ENCODE measurements at regions of chr3 and their contacts with region 1.

Region 1: DNA sequence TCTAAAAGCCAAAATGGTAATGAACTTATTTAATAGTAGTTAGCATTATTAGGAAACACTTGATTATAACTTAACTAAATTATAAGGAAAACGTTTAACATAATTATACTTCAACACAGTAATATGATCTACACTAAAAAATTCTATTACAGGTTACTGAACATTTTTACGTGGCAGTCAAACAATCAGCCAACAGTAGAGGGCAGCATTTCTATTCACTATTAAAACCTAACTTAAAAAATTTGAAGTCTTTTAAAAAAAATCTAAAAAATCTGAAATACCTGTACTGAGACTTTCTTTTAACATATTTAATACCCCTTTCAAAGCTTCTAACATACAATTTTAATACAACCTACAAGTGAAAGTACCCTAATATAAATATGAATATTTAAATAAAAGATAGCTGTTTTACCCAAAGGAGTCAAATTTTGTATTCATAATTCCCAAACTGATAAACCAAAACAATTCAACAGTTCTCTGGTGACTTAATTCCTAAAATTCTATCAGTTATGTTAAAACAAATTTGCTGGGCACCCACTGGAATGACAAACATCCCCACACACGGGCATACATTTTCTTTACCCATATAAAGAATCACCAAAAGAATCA is 41.5 kb downstream of the DLG1 start:
- DNase-seq: no peak
- ATAC-seq: no peak
- H3K4me3 ChIP-seq: no peak overlapping the region
- H3K27ac ChIP-seq: no peak overlapping the region
- H3K4me1 ChIP-seq: peaks cover 48% of the 10 kb centered on the region in 2 donors
- H3K27me3 ChIP-seq: no peaks in the 10 kb centered on the region
- CTCF ChIP-seq: peak; percentile 51 to 80 (median 75)
- POLR2A ChIP-seq: no peak

Region 2: DNA sequence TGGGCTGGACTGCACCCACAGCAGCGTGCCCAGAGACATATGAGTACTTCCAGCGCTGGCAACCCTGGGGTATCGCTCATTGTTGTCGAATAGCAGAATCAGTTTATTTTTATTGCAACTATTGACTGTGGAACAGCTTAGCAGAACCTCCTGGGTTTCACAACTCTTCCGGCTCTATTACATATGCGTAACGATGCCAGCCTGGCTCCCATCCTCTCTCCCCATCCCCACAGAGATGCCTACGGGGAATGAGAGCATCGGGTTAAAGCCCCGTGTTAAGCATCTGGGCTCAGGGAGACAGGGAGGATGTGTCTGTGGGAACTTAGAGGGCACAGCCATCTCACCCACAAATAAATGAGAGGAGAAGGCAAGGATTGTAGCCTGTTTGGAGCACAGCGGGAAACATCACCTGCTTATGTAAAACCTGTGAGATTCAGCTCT is 118.1 kb after region 1 on chr3:
- in situ Hi-C with region 1: no loop called
- intact Hi-C with region 1: loop called (anchors 5 kb)
- DNase-seq: no peak
- ATAC-seq: peak; percentile 22 to 65
- H3K4me3 ChIP-seq: no peak overlapping the region
- H3K27ac ChIP-seq: peak overlapping the region in 2 of 4 donors; percentile 18 to 20
- H3K4me1 ChIP-seq: peaks cover 6 to 9% of the 10 kb centered on the region in 2 donors
- H3K27me3 ChIP-seq: no peaks in the 10 kb centered on the region
- CTCF ChIP-seq: no peak
- POLR2A ChIP-seq: no peak

Region 3: DNA sequence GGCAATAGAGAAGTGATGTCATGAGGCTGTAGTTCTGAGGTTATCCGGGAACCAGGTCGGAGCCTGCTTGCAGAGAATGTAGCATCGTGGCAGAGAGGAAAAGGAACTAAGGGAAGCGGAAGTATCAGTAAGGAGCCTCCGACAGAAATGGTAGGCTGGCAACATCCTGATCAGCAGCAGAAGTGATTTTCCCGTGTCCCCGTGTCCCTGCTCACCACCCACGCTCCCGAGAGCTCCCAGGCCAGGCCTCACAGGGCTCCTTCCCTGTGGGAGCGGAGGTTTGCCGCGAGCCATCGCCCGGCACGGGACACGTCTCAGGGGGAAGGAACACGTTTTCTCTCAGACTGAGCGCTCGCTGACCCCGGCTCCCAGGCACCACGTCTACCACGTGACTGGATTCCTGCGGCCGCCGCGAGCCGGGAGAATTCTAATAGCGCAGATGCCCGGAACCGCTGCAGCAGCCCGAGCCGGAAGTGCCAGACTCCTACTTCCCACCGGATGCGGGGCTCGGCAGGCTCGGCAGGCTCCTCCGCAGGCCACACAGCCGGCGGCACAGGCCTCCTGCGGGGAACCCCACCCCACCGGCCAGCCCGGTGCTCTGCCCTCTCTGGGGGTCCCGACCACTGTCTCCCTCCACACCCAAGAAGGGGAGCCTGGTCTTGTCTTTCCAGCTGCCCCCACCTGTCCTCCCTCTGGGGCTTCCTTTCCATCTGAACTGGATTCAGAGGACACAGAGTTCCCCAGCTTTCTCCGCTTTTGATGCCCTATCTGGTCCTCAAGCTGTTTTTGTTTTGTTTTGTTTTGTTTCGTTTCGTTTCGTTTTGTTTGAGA is 199.5 kb after region 1 on chr3:
- in situ Hi-C with region 1: loop called in 1 of 4 experiments (anchors 10 kb)
- intact Hi-C with region 1: loop called (anchors 1 kb)
- DNase-seq: peak; percentile 55 to 64
- ATAC-seq: peak; percentile 69 to 88
- H3K4me3 ChIP-seq: peak overlapping the region; percentile 60 to 90 (median 72)
- H3K27ac ChIP-seq: peak overlapping the region; percentile 53 to 71 (median 63)
- H3K4me1 ChIP-seq: peaks cover 0 to 10% of the 10 kb centered on the region in 2 donors
- H3K27me3 ChIP-seq: peaks cover 0 to 2% (median 0%) of the 10 kb centered on the region in 3 donors
- CTCF ChIP-seq: no peak
- POLR2A ChIP-seq: peak in 1 of 2 donors; percentile 14

Region 4: GRCh38 chr3:197501879-197502620 is 245.1 kb after region 1 on chr3:
- in situ Hi-C with region 1: loop called in 1 of 4 experiments (anchors 10 kb)
- intact Hi-C with region 1: no loop called
- DNase-seq: no peak
- ATAC-seq: no peak
- H3K4me3 ChIP-seq: no peak overlapping the region
- H3K27ac ChIP-seq: no peak overlapping the region
- H3K4me1 ChIP-seq: no peaks in the 10 kb centered on the region
- H3K27me3 ChIP-seq: no peaks in the 10 kb centered on the region
- CTCF ChIP-seq: peak in 2 of 5 experiments; percentile 26 to 29
- POLR2A ChIP-seq: no peak

Region 5: GRCh38 chr3:197511130-197511529 is 254.2 kb after region 1 on chr3:
- in situ Hi-C with region 1: loop called (anchors 5 to 10 kb)
- intact Hi-C with region 1: loop called (anchors 1 kb)
- DNase-seq: no peak
- ATAC-seq: no peak
- H3K4me3 ChIP-seq: no peak overlapping the region
- H3K27ac ChIP-seq: no peak overlapping the region
- H3K4me1 ChIP-seq: peaks cover 0 to 1% of the 10 kb centered on the region in 2 donors
- H3K27me3 ChIP-seq: peaks cover 0 to 9% (median 0%) of the 10 kb centered on the region in 3 donors
- CTCF ChIP-seq: no peak
- POLR2A ChIP-seq: no peak